ENCODE measurements at regions of chr14 and their contacts with region 1.

Region 1: GRCh38 chr14:37172024-37172869 is at the start of gene SLC25A21:
- DNase-seq: no peak
- H3K4me3 ChIP-seq: peak within 1 kb of the TSS; percentile 66 to 78 (median 70)
- H3K27ac ChIP-seq: peak within 1 kb of the TSS; percentile 88 to 92 (median 90)
- H3K4me1 ChIP-seq: peaks cover 15 to 21% (median 17%) of the 10 kb centered on the region in 4 donors
- H3K27me3 ChIP-seq: no peaks in the 10 kb centered on the region
- CTCF ChIP-seq: peak in 1 of 3 experiments; percentile 11
- EP300 ChIP-seq: no peak
- POLR2A ChIP-seq: no peak
- total RNA-seq, gene SLC25A21: 0.39 to 3.3 (median 1.2) TPM

Region 2: GRCh38 chr14:37197421-37198272 is 25.4 kb after region 1 on chr14 and contains the start of gene MIPOL1:
- intact Hi-C with region 1: loop called (anchors 2 kb)
- DNase-seq: peak; percentile 93
- H3K4me3 ChIP-seq: peak within 1 kb of the TSS; percentile 63 to 80 (median 68)
- H3K27ac ChIP-seq: peak within 1 kb of the TSS; percentile 89 to 93 (median 92)
- H3K4me1 ChIP-seq: peaks cover 3 to 19% (median 13%) of the 10 kb centered on the region in 4 donors
- H3K27me3 ChIP-seq: no peaks in the 10 kb centered on the region
- CTCF ChIP-seq: peak in 2 of 3 experiments; percentile 45 to 49
- EP300 ChIP-seq: no peak
- POLR2A ChIP-seq: no peak
- total RNA-seq, gene MIPOL1: 6.5 to 21.2 (median 10.4) TPM

Region 3: GRCh38 chr14:37278636-37279538 is 106.6 kb after region 1 on chr14:
- intact Hi-C with region 1: no loop called
- DNase-seq: no peak
- H3K4me3 ChIP-seq: no peak overlapping the region
- H3K27ac ChIP-seq: no peak overlapping the region
- H3K4me1 ChIP-seq: no peaks in the 10 kb centered on the region
- H3K27me3 ChIP-seq: no peaks in the 10 kb centered on the region
- CTCF ChIP-seq: no peak
- EP300 ChIP-seq: no peak
- POLR2A ChIP-seq: no peak

Measured in esophagus muscularis mucosa (tissue), 4 donors.